ENCODE measurements at regions of chr4 and their contacts with region 1.

Region 1: GRCh38 chr4:82428969-82429727 is 1.1 kb downstream of the HNRNPDL start:
- DNase-seq: peak; percentile 93
- ATAC-seq: peak; percentile 61
- H3K4me3 Mint-ChIP-seq: peak overlapping the region; percentile 100
- H3K27ac Mint-ChIP-seq: peak overlapping the region; percentile 100
- H3K4me1 Mint-ChIP-seq: peaks cover 50% of the 10 kb centered on the region
- H3K27me3 Mint-ChIP-seq: no peaks in the 10 kb centered on the region; the same call in 1 of the 2 replicates
- CTCF ChIP-seq: peak; percentile 94

Region 2: GRCh38 chr4:82373816-82374625 is 55.1 kb before region 1 on chr4 and contains the start of gene HNRNPD:
- CTCF ChIA-PET with region 1: interaction called, 13 read pairs
- POLR2A ChIA-PET with region 1: interaction called, 68 read pairs
- DNase-seq: peak; percentile 97
- ATAC-seq: peak; percentile 92
- H3K4me3 Mint-ChIP-seq: peak within 1 kb of the TSS; percentile 98
- H3K27ac Mint-ChIP-seq: peak within 1 kb of the TSS; percentile 100
- H3K4me1 Mint-ChIP-seq: peaks cover 34% of the 10 kb centered on the region
- H3K27me3 Mint-ChIP-seq: no peaks in the 10 kb centered on the region
- CTCF ChIP-seq: no peak
- total RNA-seq, gene HNRNPD: 493 to 580 TPM (median 496 TPM) in 3 replicates

Region 3: GRCh38 chr4:82379964-82380733 is 49.0 kb before region 1 on chr4:
- CTCF ChIA-PET with region 1: interaction called, 3 read pairs
- POLR2A ChIA-PET with region 1: interaction called, 68 read pairs
- DNase-seq: no peak
- ATAC-seq: peak; percentile 50
- H3K4me3 Mint-ChIP-seq: no peak overlapping the region
- H3K27ac Mint-ChIP-seq: no peak overlapping the region
- H3K4me1 Mint-ChIP-seq: peaks cover 12% of the 10 kb centered on the region
- H3K27me3 Mint-ChIP-seq: no peaks in the 10 kb centered on the region
- CTCF ChIP-seq: no peak

Region 4: DNA sequence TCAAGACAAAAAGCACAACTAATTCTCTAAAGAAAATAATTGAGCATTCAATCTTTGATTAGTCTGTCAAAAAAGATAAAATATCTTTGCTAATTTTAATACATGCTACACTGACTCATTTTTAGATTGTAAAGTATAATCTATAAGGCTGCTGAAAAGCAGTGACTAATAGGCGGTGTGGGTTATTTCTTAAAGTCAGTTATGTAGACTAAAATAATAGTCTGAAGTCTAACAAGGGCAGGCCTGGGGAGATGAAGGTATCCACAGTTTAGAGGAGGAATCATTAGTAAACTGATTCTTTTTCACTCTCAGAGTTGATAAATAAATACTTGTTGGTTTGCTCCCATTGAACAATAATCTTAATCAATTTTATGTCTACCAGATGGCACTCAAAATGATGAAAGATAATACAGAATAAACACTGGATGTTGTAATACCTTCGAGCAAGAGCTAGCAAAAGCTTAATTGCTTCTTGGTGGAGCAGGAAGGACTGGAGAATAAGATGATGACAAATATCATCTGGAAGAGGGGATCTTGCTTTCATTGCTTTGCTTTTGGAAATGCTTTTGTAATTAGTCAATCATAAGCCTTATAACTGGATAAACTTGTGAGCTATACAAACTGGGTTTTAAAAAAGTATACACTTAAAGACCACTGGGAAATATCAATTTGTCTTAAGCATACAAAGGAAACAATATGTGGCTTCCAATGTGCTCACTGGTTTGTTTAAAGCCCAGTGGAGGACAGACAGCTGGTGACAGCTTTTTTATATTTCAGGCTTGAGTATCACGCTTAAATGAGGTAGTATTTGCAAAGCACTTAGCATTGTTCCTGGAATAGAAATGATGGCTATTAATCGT is 71.2 kb after region 1 on chr4:
- CTCF ChIA-PET with region 1: no interaction called
- POLR2A ChIA-PET with region 1: no interaction called
- DNase-seq: no peak
- ATAC-seq: no peak
- H3K4me3 Mint-ChIP-seq: no peak overlapping the region
- H3K27ac Mint-ChIP-seq: no peak overlapping the region
- H3K4me1 Mint-ChIP-seq: peaks cover 23% of the 10 kb centered on the region
- H3K27me3 Mint-ChIP-seq: no peaks in the 10 kb centered on the region
- CTCF ChIP-seq: no peak

Region 5: GRCh38 chr4:82525395-82525831 is 96.3 kb after region 1 on chr4:
- CTCF ChIA-PET with region 1: no interaction called
- POLR2A ChIA-PET with region 1: no interaction called
- DNase-seq: no peak
- ATAC-seq: no peak
- H3K4me3 Mint-ChIP-seq: no peak overlapping the region
- H3K27ac Mint-ChIP-seq: no peak overlapping the region
- H3K4me1 Mint-ChIP-seq: peaks cover 23% of the 10 kb centered on the region
- H3K27me3 Mint-ChIP-seq: no peaks in the 10 kb centered on the region
- CTCF ChIP-seq: no peak

Measured in WTC11 (cell line).